ENCODE measurements at regions of chr11 and their contacts with region 1.

Region 1: GRCh38 chr11:8006349-8006977 is 19.3 kb downstream of the EIF3F start:
- DNase-seq: peak in 4 of 5 donors; percentile 44 to 57 (median 54)
- ATAC-seq: peak; percentile 62 to 89 (median 88)
- H3K4me3 ChIP-seq: no peak overlapping the region
- H3K27ac ChIP-seq: no peak overlapping the region
- H3K4me1 ChIP-seq: no peaks in the 10 kb centered on the region
- H3K27me3 ChIP-seq: no peaks in the 10 kb centered on the region
- CTCF ChIP-seq: peak; percentile 62 to 90 (median 82)
- POLR2A ChIP-seq: no peak

Region 2: GRCh38 chr11:7945291-7945690 is 61.2 kb before region 1 on chr11:
- intact Hi-C with region 1: no loop called
- DNase-seq: no peak
- ATAC-seq: no peak
- H3K4me3 ChIP-seq: no peak overlapping the region
- H3K27ac ChIP-seq: no peak overlapping the region
- H3K4me1 ChIP-seq: no peaks in the 10 kb centered on the region
- H3K27me3 ChIP-seq: peaks cover 0 to 10% (median 0%) of the 10 kb centered on the region in 9 donors
- CTCF ChIP-seq: no peak
- POLR2A ChIP-seq: no peak

Region 3: DNA sequence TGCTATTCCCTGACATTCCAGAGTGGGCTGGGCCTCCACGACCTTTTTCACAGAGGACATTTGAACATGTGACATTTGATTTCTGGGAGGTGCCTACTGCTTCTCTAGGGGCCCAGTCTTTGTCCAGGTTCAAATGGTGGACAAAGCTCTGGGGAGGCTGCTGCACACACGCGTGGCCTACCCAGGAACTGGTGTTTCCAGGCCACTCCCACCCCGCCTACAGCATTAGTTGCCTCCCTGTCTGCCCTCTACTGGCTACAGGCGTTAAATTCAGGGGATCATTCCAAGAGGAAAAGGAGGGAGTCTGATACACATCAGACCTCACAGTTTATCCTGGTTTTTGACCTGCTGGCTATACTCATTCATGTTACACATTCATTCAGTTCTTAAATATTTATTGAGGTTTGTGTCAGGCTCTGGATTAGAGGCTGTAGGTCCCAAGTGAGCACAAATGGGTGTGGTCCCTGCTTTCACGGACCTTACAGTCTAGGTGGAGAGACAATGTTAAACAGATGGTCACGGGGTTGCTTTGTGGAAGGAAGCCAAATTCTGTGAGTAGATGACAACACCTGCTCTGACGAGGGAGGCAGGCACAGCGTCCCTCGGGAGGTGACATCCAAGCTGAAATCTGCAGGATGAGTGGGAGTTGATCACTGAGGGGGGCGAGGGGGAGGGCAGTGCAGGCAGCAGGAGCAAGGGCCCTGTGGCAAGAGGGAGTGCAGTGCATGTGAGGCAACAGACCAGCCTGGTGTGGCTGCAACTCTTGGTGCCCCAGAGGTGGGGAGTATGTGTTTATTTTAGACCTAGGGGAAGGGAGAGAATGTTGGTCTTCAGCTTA is 86.3 kb after region 1 on chr11:
- intact Hi-C with region 1: loop called in 9 of 10 experiments (anchors 1 to 5 kb)
- DNase-seq: peak in 4 of 5 donors; percentile 50 to 79 (median 71)
- ATAC-seq: peak; percentile 39 to 75 (median 66)
- H3K4me3 ChIP-seq: no peak overlapping the region
- H3K27ac ChIP-seq: peak overlapping the region in 2 of 12 donors; percentile 24 to 33
- H3K4me1 ChIP-seq: peaks cover 0 to 15% (median 5%) of the 10 kb centered on the region in 12 donors
- H3K27me3 ChIP-seq: no peaks in the 10 kb centered on the region
- CTCF ChIP-seq: peak; percentile 51 to 74 (median 62)
- POLR2A ChIP-seq: no peak

Region 4: DNA sequence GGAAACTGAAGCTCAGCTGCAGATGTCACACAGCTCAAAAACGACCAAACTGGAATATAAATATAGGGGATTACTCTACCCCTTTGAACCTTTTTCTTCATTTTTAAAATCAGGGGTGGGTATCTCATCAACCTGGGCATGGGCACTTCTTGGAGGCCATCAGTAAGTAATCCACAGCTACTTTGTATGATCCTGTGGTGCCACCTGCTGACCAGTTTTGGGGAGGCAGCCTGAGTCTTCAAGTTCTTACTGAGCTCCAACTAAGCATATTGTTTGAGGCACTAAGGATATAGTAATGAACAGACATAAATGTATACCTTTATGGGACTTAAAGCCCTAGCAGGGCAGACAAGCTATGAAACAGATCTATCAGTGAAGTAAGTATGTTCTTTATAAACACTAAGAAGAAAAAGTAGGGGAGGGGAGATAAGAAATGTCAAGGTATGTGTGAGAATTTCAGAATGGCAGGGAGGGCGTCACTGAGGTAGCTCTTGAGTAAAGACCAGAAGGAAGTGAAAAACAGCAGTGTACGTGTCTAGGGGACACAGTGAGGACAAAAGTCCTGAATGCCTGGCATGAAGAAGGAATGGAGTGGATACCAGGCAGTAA is 92.9 kb after region 1 on chr11:
- intact Hi-C with region 1: loop called (anchors 1 to 5 kb)
- DNase-seq: peak in 4 of 5 donors; percentile 59 to 73 (median 70)
- ATAC-seq: peak; percentile 47 to 70 (median 56)
- H3K4me3 ChIP-seq: no peak overlapping the region
- H3K27ac ChIP-seq: no peak overlapping the region
- H3K4me1 ChIP-seq: no peaks in the 10 kb centered on the region
- H3K27me3 ChIP-seq: no peaks in the 10 kb centered on the region
- CTCF ChIP-seq: peak; percentile 52 to 89 (median 80)
- POLR2A ChIP-seq: no peak

Region 5: DNA sequence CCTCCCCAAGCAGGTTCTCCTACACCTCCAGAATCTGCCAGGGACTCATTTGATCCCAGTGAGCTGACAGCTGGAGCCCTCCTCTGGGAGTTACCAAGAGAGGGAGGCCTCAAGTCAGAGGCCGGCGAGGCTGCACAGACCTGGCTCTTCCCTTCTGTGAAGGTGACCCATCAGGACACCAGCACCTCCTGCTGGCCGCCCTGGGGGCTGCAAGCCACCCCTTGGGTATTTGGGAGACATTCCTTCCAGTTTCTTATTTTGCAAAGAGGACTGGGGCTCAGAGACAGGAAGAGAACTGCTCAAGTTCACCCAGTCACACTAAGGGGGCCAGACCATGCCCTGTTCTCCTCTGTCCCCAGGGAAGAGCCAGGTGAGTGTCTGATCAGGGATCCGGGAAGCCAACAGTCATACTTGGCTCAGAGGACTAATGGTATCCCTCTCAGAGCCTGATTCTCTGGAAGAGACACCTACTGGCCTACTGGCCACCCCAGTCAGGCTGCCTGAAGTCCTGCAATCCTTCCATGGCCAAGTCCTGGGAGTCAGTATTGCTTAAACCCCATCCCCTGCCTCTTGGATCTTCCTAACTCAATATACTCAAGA is 202.8 kb after region 1 on chr11:
- intact Hi-C with region 1: loop called in 1 of 10 experiments (anchors 5 kb)
- DNase-seq: peak in 1 of 5 donors; percentile 80
- ATAC-seq: no peak
- H3K4me3 ChIP-seq: no peak overlapping the region
- H3K27ac ChIP-seq: no peak overlapping the region
- H3K4me1 ChIP-seq: peaks cover 0 to 30% (median 7%) of the 10 kb centered on the region in 12 donors
- H3K27me3 ChIP-seq: peaks cover 0 to 29% (median 0%) of the 10 kb centered on the region in 9 donors
- CTCF ChIP-seq: peak in 9 of 12 donors; percentile 8 to 58 (median 26)
- POLR2A ChIP-seq: no peak